ENCODE measurements at regions of chr20 and their contacts with region 1.

Region 1: GRCh38 chr20:61744691-61745396 is 320.8 kb downstream of the TAF4 start:
- DNase-seq: peak in 3 of 10 donors; percentile 63 to 70 (median 66)

Region 2: DNA sequence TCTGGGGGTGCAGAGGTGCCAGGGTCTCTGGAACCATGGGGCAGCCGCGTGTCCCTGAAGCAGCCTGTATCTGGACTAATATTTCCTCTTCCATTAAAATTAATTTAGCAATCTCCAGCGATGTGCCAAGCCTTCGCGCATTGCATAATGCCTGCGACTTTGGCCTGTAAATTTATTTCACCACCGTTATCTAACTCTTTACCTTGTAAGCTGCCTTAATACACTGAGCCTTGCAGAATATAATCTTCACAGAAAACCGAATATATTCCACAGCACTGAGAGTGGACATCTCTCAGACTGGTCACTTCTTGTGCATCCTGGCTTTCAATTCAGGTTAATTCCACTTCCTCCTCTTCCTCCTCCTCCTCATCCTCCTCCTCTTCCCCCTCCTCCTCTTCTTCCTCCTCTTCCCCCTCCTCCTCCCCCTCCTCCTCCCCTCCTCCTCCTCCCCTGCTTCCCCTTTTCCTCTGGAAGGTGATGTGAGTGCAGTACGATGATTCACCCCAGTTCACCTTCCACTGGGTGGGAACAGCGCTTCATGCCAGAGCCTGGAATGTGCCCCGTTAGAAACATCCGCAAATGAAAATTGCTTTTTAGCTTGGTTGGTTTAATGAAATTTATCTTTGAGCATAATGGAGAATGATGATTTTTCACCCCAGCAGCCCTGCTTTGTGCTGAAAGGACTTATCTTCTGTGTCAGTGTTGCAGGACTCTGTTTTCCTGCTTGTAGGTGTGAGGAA is 391.4 kb before region 1 on chr20:
- intact Hi-C with region 1: no loop called
- DNase-seq: peak in 1 of 10 donors; percentile 29

Region 3: GRCh38 chr20:61694682-61695081 is 50.2 kb before region 1 on chr20:
- intact Hi-C with region 1: no loop called
- DNase-seq: peak in 6 of 10 donors; percentile 31 to 91 (median 65)

Region 4: GRCh38 chr20:61896058-61896961 is 151.5 kb after region 1 on chr20:
- intact Hi-C with region 1: loop called (anchors 5 kb)
- DNase-seq: peak in 8 of 10 donors; percentile 57 to 93 (median 64)